Gastrocnemius medialis (tissue), 4 donors: ENCODE measurements at regions of chr17 and their contacts with region 1.

Region 1: DNA sequence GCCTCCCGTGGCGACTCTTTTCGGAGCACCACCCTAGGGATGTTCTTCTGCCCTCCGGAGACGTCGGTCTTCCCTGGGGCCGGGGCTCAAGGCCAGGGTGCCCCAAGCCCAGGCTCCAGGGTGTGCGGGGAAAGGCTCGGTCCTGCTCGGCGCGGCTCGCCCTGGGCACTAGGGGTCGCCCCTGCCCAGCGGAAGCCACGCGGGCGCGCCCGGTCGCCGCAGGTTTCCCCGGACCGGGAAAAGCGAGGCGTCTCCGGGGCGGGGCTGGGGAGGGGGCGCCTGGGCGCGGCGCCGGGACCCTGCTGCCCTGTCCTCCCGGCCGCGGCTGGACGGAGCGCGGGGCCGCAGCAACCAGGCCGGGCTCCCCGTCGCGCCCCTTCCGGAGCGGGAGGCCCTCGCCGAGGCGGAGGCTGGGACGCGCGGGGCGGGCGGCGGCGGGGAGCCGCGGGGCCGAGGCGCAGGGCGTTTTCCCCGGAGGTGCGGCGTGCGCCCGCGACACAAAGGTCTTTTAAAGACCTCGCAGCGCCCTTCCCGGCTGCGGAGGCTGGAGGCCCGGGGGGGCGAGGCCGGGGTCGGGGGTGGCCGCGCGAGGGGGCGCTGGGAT is 76.4 kb downstream of the MRC2 start:
- DNase-seq: peak in 1 of 2 donors; percentile 28
- ATAC-seq: peak; percentile 58 to 82
- H3K4me3 ChIP-seq: peak overlapping the region; percentile 35 to 57 (median 52)
- H3K27ac ChIP-seq: peak overlapping the region in 3 of 4 donors; percentile 30 to 33 (median 31)
- H3K4me1 ChIP-seq: peaks cover 0 to 5% of the 10 kb centered on the region in 2 donors
- H3K27me3 ChIP-seq: peaks cover 6 to 12% (median 10%) of the 10 kb centered on the region in 3 donors
- CTCF ChIP-seq: peak; percentile 60 to 89 (median 74)
- POLR2A ChIP-seq: no peak

Region 2: DNA sequence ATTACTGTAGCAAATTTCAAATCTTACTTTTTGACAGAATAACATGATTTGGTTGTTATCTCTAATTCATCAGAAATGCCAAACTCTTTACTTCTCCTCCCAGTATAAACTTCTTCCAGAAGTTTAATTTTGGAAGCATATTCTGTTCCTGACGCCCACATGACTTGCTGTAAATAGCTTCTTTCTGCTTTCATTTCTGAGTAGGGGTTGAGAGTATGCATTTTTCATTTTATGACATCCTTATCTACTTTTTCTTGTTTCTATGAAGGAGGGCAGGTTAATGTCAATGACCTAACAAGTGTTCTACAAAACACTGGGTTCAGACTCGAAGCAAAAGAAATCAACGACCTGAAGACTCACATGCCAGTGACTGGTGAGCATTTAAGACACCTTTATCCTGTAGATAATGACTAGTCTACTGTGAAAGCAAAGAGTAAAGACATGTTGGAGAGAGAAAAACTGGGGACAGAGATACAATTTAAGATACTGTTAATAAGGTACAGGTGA is 360.1 kb before region 1 on chr17:
- in situ Hi-C with region 1: no loop called
- intact Hi-C with region 1: no loop called
- DNase-seq: no peak
- ATAC-seq: no peak
- H3K4me3 ChIP-seq: no peak overlapping the region
- H3K27ac ChIP-seq: no peak overlapping the region
- H3K4me1 ChIP-seq: no peaks in the 10 kb centered on the region
- H3K27me3 ChIP-seq: no peaks in the 10 kb centered on the region
- CTCF ChIP-seq: no peak
- POLR2A ChIP-seq: no peak

Region 3: DNA sequence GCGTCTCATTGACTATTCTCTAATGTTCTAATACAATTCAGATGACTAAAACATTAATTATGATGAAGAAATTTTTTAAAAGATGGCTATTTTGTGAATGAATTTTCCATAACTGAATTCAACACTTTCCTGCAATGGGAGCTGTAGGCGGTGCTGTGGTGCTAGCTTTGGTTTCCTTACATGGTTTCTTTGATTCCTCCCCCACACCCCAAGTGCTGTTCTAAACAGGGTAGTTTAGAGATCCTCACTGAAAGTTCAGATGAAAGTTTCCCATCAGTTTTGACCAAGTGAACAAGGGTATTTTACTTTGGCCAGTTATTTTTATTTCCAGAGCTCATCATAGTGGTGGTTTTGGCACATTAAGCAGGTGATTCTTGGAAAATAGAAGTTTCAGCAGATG is 102.4 kb before region 1 on chr17:
- in situ Hi-C with region 1: no loop called
- intact Hi-C with region 1: no loop called
- DNase-seq: no peak
- ATAC-seq: no peak
- H3K4me3 ChIP-seq: no peak overlapping the region
- H3K27ac ChIP-seq: no peak overlapping the region
- H3K4me1 ChIP-seq: no peaks in the 10 kb centered on the region
- H3K27me3 ChIP-seq: no peaks in the 10 kb centered on the region
- CTCF ChIP-seq: no peak
- POLR2A ChIP-seq: no peak

Region 4: GRCh38 chr17:62933501-62934385 is 229.9 kb after region 1 on chr17:
- in situ Hi-C with region 1: no loop called
- intact Hi-C with region 1: no loop called
- DNase-seq: no peak
- ATAC-seq: no peak
- H3K4me3 ChIP-seq: no peak overlapping the region
- H3K27ac ChIP-seq: no peak overlapping the region
- H3K4me1 ChIP-seq: no peaks in the 10 kb centered on the region
- H3K27me3 ChIP-seq: no peaks in the 10 kb centered on the region
- CTCF ChIP-seq: no peak
- POLR2A ChIP-seq: no peak

Region 5: GRCh38 chr17:62968445-62968923 is 264.6 kb after region 1 on chr17:
- in situ Hi-C with region 1: loop called in 3 of 4 experiments (anchors 5 to 25 kb)
- intact Hi-C with region 1: loop called (anchors 1 kb)
- DNase-seq: no peak
- ATAC-seq: no peak
- H3K4me3 ChIP-seq: no peak overlapping the region
- H3K27ac ChIP-seq: no peak overlapping the region
- H3K4me1 ChIP-seq: peaks cover 7 to 12% of the 10 kb centered on the region in 2 donors
- H3K27me3 ChIP-seq: no peaks in the 10 kb centered on the region
- CTCF ChIP-seq: peak; percentile 22 to 62 (median 47)
- POLR2A ChIP-seq: no peak

Region 6: GRCh38 chr17:63399856-63400255 is 696.0 kb after region 1 on chr17:
- in situ Hi-C with region 1: loop called in 3 of 4 experiments (anchors 5 to 25 kb)
- intact Hi-C with region 1: no loop called
- DNase-seq: peak in 1 of 2 donors; percentile 53
- ATAC-seq: peak in 1 of 2 donors; percentile 36
- H3K4me3 ChIP-seq: no peak overlapping the region
- H3K27ac ChIP-seq: no peak overlapping the region
- H3K4me1 ChIP-seq: peaks cover 0 to 11% of the 10 kb centered on the region in 2 donors
- H3K27me3 ChIP-seq: no peaks in the 10 kb centered on the region
- CTCF ChIP-seq: no peak
- POLR2A ChIP-seq: no peak